Left cardiac atrium (tissue), 4 donors: ENCODE measurements at regions of chr20 and their contacts with region 1.

Region 1: GRCh38 chr20:31674895-31675827 is 37.4 kb downstream of the COX4I2 start:
- DNase-seq: peak; percentile 83
- ATAC-seq: peak; percentile 73 to 75

Region 2: DNA sequence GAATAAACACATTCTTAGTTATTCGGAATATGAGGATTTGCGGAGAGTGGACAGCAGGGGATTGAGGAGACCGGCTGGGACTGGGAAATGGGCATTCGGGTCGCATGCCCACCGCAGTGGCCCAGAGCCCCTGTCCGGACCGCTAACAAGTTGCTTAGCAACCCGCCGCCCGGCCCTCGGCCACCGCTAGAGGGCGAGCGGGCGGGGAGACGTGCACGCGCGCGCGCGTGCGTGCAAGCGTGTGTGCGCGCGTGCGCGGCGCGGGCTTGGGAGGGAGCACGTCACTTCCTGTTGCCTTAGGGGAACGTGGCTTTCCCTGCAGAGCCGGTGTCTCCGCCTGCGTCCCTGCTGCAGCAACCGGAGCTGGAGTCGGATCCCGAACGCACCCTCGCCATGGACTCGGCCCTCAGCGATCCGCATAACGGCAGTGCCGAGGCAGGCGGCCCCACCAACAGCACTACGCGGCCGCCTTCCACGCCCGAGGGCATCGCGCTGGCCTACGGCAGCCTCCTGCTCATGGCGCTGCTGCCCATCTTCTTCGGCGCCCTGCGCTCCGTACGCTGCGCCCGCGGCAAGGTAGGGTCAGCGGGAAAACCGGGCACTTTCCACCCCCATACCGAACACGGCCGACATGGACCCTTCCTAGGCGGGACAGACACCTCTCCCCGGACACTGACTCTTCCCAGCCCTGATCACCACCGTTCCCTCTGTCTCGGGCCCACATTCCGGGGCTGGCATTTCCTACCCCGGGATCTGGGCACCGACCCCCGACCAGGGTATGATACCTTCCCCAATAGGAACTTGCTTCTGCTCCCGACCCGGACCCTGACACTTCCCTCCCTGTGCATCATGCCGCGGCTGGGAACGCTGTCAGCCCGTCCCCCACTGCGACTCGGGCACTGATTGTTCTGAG is 160.7 kb before region 1 on chr20 and contains the start of gene HM13:
- intact Hi-C with region 1: no loop called
- DNase-seq: peak; percentile 93
- ATAC-seq: peak; percentile 95 to 98
- total RNA-seq, gene HM13: 64.9 to 88.9 TPM

Region 3: GRCh38 chr20:31712564-31713311 is 37.6 kb after region 1 on chr20:
- intact Hi-C with region 1: loop called in 1 of 2 experiments (anchors 5 kb)
- DNase-seq: peak; percentile 89
- ATAC-seq: peak; percentile 82 to 91